Dorsolateral prefrontal cortex (tissue), 120 donors: ENCODE measurements at regions of chr17 and their contacts with region 1.

Region 1: GRCh38 chr17:77390870-77391269 is 250.1 kb downstream of the SEC14L1 start:
- DNase-seq: no peak
- H3K4me3 ChIP-seq: no peak overlapping the region
- H3K27ac ChIP-seq: peak overlapping the region in 15 of 59 donors; percentile 1 to 91 (median 55)
- H3K27me3 ChIP-seq: no peaks in the 10 kb centered on the region
- CTCF ChIP-seq: no peak

Region 2: GRCh38 chr17:77273397-77274085 is 117.3 kb before region 1 on chr17:
- intact Hi-C with region 1: no loop called
- DNase-seq: no peak
- H3K4me3 ChIP-seq: no peak overlapping the region
- H3K27ac ChIP-seq: no peak overlapping the region
- H3K27me3 ChIP-seq: no peaks in the 10 kb centered on the region
- CTCF ChIP-seq: no peak

Region 3: DNA sequence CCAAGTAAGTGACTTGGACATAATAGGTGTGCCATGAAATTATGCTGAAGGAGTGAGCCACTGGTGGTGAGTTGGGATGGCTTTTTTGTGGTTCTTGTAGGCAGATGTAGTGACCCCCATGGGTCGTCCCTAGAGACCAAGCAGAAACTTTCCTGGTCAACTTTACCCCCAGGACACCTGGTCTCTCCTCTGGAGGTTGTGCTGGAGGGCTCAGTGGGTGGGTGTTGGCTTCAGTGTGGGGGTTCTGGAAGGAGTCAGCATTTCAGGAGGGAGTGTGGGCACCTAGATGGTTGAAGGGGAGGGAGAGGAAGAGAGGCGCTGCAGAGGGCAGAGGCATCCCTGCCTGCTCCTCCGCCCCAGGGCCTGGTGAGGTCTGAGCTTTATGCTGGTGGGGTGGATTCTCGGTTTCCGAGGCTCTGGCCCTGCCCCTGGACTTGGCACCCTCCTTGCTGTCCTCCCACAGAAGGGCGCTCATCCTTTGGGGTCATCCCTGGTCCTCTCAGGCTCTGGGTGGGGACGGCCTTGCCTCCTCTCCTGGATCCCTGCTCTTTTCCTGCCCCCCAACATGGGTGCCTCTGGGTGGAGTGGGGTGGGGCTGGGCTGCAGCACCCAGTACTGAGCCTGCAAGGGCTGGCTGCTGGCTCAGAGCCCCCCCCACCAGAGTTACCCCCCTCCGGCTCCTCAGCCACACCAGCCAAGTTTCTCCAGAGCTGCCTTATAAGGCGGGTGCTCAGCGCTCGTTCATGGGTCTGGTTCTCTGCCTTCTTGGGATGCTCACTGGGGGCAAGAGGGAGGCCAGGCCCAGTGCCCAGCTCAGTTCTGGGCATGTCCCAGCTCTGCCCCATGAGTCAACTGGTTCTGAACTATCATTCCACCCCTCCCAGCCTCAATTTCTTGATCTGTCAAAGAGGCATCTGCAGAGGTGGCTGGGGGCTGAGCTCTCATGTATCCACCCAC is 16.7 kb after region 1 on chr17:
- intact Hi-C with region 1: loop called in 1 of 2 experiments (anchors 1 kb)
- DNase-seq: no peak
- H3K4me3 ChIP-seq: no peak overlapping the region
- H3K27ac ChIP-seq: peak overlapping the region in 5 of 59 donors; percentile 8 to 73 (median 25)
- H3K27me3 ChIP-seq: no peaks in the 10 kb centered on the region
- CTCF ChIP-seq: no peak